ENCODE measurements at regions of chr17 and their contacts with region 1.

Region 1: GRCh38 chr17:76643553-76644148 is at the start of gene ST6GALNAC1:
- DNase-seq: peak; percentile 70 to 94 (median 78)
- ATAC-seq: peak; percentile 85
- H3K4me3 ChIP-seq: peak within 1 kb of the TSS; percentile 47
- H3K27ac ChIP-seq: peak within 1 kb of the TSS; percentile 94
- H3K4me1 ChIP-seq: peaks cover 22 to 26% of the 10 kb centered on the region in 2 experiments; a peak in 4 of 5 replicates
- H3K27me3 ChIP-seq: no peaks in the 10 kb centered on the region
- CTCF ChIP-seq: no peak
- EP300 ChIP-seq: peak; percentile 61
- POLR2A ChIP-seq: peak; percentile 91
- RAD21 ChIP-seq: no peak
- polyA plus RNA-seq, gene ST6GALNAC1: 50.4 to 62.9 TPM

Region 2: DNA sequence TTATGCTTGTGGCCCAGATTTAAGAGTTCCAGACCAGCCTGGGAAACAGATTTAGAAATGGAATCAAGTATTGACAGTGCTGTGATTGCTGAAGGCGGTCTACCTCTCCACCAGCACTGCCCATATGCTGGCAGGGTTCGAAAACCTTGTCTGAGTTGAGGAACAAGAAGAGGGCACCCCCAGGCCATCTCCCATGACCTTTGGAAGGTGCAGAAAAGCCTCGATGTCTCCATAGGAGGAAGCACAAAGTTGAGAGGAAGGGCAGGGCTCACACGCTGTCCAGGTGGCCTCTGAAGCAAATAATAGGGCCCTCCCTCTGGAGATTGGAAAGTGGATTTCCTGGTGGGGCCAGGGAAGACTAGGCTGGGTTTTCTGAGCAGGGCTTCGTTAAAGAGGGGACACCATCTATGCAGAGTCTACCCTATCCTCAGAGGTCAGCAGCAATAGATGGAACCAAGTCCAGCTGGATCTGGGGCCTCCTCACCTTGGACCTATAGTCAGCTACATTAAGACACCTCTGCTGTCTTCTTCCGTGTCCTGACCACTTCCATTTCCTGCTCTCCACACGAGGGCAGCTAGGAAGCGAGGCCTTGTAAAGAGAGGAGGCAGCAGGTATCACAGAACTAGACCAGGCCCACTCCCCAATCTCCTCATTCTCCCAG is 14.5 kb after region 1 on chr17:
- CTCF ChIA-PET with region 1: no interaction called
- POLR2A ChIA-PET with region 1: interaction called, 14 read pairs
- in situ Hi-C with region 1: no loop called
- intact Hi-C with region 1: no loop called
- DNase-seq: no peak
- ATAC-seq: peak; percentile 16; the same call in 1 of the 3 replicates
- H3K4me3 ChIP-seq: no peak overlapping the region
- H3K27ac ChIP-seq: no peak overlapping the region
- H3K4me1 ChIP-seq: peaks cover 17 to 21% of the 10 kb centered on the region in 2 experiments
- H3K27me3 ChIP-seq: no peaks in the 10 kb centered on the region
- CTCF ChIP-seq: no peak
- EP300 ChIP-seq: no peak
- POLR2A ChIP-seq: no peak
- RAD21 ChIP-seq: no peak